Activated naive CD4-positive, alpha-beta T cell treated with anti-CD3 and anti-CD28 coated beads, Interleukin-2, amount 10 ng/mL, durations not matched to agents 7 days and 5 days (primary cell): ENCODE measurements at regions of chr17 and their contacts with region 1.

Region 1: DNA sequence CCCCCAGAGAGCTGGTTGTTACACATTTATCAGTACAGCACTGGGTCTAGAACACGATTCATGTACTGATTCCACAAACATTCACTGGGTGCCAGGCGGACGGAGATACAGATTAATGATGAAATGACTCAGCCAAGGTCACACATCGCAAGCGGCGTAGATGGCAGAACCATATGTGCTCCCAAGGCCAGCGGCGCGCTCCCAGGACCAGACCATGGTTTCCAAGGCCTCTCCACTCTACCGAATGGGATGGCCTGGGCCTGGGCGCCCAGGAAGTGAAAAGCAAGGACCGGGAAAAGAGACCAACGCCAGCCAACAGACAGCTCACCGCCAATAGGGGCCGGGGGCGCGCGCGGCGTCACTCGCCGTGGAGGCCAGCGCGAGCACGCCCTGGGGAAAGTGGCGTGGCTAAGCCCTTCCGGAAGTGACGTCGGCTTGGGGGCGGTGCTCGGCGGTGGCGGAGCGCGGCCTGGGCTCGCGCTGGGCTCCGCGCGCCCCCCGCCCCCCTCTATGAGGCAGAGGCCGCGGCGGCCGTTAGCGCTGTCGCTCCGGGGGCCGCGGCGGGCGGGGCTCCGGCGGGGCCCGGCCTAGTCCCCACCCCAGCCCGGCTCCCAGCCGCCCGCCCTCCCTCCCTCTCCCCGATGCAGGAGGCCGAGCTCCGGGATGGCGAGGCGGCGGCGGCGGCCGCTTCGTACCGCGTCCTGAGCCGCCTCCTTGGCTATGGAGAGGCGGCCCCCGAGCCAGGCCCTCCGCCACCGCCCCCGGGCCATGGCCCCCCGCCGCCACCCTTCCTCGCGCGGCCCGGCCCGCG is at the start of gene SOCS7:
- DNase-seq: peak; percentile 95
- H3K4me3 Mint-ChIP-seq: peak within 1 kb of the TSS; percentile 92
- H3K27ac Mint-ChIP-seq: peak within 1 kb of the TSS; percentile 90
- H3K4me1 Mint-ChIP-seq: peaks cover 44% of the 10 kb centered on the region
- H3K27me3 Mint-ChIP-seq: peaks cover 3% of the 10 kb centered on the region

Region 2: GRCh38 chr17:38322091-38322779 is 29.4 kb before region 1 on chr17:
- CTCF ChIA-PET with region 1: interaction called, 14 read pairs
- DNase-seq: peak; percentile 81
- H3K4me3 Mint-ChIP-seq: no peak overlapping the region
- H3K27ac Mint-ChIP-seq: no peak overlapping the region
- H3K4me1 Mint-ChIP-seq: peaks cover 6% of the 10 kb centered on the region
- H3K27me3 Mint-ChIP-seq: no peaks in the 10 kb centered on the region

Region 3: GRCh38 chr17:38333635-38334295 is 17.9 kb before region 1 on chr17:
- CTCF ChIA-PET with region 1: interaction called, 49 read pairs
- DNase-seq: peak; percentile 75
- H3K4me3 Mint-ChIP-seq: no peak overlapping the region
- H3K27ac Mint-ChIP-seq: no peak overlapping the region
- H3K4me1 Mint-ChIP-seq: no peaks in the 10 kb centered on the region
- H3K27me3 Mint-ChIP-seq: peaks cover 48% of the 10 kb centered on the region

Region 4: DNA sequence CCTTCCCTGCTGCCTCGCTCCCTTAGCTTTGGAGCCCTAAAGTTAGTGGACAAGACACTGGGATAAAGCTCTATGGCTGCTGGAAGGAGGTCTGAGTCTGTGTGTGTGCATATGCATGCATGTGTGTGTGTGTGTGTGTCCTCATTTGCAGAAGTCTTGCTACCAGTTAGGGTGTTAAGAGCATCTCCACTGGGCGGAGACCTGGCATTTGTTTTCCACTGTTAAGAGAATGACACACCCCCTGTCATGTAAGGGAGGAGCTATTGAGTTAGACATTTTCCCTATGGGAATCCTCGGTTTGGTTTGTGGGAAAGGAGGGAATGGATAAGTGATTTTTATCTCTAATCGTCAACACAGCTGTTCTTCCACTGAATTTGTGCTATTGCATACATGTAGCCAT is 51.9 kb after region 1 on chr17:
- CTCF ChIA-PET with region 1: interaction called, 11 read pairs
- DNase-seq: no peak
- H3K4me3 Mint-ChIP-seq: no peak overlapping the region
- H3K27ac Mint-ChIP-seq: no peak overlapping the region
- H3K4me1 Mint-ChIP-seq: peaks cover 3% of the 10 kb centered on the region
- H3K27me3 Mint-ChIP-seq: no peaks in the 10 kb centered on the region

Region 5: DNA sequence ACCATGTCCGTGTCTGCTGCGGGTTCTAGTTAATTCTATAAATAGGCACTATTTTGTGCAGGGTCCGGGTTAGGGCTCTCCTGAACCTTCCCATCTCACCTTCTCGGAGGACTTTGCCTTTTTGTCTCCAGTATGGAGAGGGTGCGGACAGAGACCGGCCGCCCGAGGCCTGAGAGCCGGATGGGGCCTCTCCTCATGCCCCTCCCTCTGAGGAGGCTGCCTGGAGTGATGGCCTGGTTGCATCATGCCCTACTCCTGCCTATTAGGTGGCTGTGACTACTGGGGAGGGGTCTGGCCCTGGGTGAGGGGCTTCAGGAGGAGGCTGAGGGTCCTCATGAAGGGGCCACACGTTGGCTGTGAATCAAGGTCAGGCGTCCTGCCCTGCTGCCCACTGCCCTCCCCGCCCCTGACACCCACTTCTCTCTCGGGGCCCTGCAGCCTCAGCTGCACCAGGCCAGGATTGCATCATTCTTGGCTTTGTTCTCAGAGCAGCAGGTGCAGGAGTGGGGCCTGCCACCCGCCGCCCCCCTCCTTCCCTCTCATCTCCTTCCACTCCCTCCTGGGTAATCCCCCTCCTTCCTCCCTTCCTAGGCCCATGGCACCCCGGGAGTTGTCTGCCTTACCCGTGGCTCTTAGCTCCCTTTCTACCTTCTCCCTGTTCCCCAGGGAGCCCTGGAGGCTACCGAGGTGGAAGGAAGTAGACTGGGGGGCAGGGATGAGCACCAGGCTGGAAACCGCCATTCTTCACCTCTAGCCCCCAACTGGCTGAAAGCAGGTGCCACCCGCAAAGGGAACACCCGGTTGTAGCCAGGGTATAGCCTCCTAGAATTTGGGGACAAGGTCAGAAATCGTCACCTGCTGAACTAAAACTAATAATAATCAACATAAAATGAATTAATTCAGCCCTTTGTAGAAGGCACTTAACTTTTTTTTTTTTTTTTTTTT is 63.9 kb after region 1 on chr17:
- CTCF ChIA-PET with region 1: interaction called, 168 read pairs
- DNase-seq: no peak
- H3K4me3 Mint-ChIP-seq: no peak overlapping the region
- H3K27ac Mint-ChIP-seq: peak overlapping the region; percentile 33
- H3K4me1 Mint-ChIP-seq: peaks cover 14% of the 10 kb centered on the region
- H3K27me3 Mint-ChIP-seq: peaks cover 61% of the 10 kb centered on the region

Region 6: DNA sequence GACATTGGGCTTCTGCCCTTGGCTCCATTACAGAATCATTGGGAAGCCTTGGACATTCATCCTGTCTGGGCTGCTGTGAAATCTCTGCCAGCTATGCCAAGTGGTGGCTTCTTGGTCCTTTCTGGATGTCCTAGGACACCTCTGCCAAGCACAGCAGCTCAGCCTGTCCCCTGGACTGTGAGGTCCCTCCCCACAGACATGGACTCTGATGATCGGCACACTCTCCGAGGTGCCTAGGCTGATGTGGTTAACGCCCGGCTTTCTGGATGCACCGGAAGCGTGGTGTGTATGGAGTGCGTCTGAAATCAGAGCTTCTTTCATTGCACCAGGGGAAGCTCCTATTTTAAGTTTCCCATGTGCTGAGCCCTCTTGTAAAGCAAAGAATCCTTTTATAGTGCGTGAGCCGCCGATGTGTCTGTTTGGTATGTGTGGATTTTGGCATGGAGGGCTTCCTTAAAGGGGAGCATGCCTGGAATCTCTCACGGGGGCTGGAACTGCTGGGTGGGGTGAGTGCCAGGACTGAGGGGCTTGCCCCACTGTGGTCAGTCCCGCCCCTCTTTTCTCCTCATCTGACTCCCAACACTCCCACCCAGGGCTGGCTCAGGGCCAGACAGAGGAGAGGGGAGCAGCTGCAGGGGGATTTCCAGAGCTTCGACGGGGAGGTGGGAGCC is 69.7 kb after region 1 on chr17:
- CTCF ChIA-PET with region 1: interaction called, 168 read pairs
- DNase-seq: no peak
- H3K4me3 Mint-ChIP-seq: no peak overlapping the region
- H3K27ac Mint-ChIP-seq: no peak overlapping the region
- H3K4me1 Mint-ChIP-seq: peaks cover 2% of the 10 kb centered on the region
- H3K27me3 Mint-ChIP-seq: peaks cover 95% of the 10 kb centered on the region

Region 7: DNA sequence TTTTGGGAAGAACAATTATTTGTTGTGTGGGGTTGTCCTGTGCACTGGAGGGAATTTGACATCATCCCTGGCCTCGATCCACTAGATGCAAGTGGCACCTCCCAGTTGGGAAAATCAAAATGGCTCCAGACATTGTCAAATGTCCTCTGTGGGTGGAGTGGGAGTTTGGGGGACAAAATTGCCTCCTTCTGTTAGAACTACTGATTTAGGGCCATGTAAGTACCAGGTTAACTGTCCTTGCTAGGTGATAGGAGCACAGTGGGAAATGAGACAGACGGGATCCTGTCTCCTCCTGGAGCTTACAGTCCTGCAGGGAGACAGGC is 133.5 kb after region 1 on chr17:
- CTCF ChIA-PET with region 1: interaction called, 12 read pairs
- DNase-seq: no peak
- H3K4me3 Mint-ChIP-seq: no peak overlapping the region
- H3K27ac Mint-ChIP-seq: no peak overlapping the region
- H3K4me1 Mint-ChIP-seq: peaks cover 7% of the 10 kb centered on the region
- H3K27me3 Mint-ChIP-seq: peaks cover 21% of the 10 kb centered on the region

Region 8: DNA sequence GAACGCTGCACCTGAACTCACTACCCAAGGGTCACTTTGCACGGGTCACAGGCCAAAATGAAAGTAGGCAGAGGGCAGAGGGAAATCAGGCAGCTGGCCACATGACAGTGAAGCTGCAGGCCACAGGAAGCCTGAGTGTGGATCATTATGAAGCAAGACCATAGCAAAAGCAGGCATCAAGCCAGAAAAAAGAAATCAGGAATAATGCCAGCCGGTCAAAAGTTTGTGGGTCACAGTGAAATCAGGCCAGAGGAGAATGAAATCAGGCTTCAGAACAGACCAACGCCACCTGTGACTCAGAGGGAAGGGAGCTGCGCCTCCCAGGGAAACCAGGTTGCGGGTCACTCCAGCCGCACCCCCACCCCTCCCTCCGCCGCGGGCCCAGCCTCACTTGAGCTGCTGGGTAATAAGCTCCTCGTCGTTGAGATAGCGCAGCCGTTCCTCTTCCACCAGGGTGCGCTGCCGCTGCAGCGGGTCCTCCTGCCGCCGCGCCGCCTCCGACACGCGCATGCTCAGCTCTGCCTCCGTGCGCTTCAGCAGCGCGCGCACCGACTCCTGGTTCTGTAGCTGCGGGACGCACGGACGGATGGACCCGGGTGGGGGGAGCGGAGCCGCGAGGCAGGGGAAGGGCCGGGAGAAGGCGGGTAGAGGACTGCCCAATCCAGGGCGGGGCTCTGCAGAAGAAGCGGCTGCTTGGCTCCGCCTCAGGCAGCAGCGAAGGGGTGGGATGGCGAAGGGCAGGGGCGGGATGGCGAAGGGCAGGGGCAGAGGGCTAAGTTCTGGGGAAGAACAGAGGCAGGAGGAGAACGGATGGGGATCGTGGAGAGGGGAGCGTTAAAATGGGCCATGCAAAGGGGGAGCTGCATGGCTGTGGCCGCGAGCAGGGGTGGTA is 206.5 kb after region 1 on chr17:
- CTCF ChIA-PET with region 1: no interaction called
- DNase-seq: peak; percentile 92
- H3K4me3 Mint-ChIP-seq: peak overlapping the region; percentile 73
- H3K27ac Mint-ChIP-seq: no peak overlapping the region
- H3K4me1 Mint-ChIP-seq: peaks cover 31% of the 10 kb centered on the region
- H3K27me3 Mint-ChIP-seq: peaks cover 92% of the 10 kb centered on the region